ENCODE measurements at regions of chr3 and their contacts with region 1.

Region 1: GRCh38 chr3:196568246-196569002 is at the starts of genes FBXO45 and WDR53:
- DNase-seq: peak; percentile 97
- H3K4me3 Mint-ChIP-seq: peak within 1 kb of the TSS; percentile 98
- H3K27ac Mint-ChIP-seq: peak within 1 kb of the TSS; percentile 91
- H3K4me1 Mint-ChIP-seq: peaks cover 46% of the 10 kb centered on the region
- H3K27me3 Mint-ChIP-seq: no peaks in the 10 kb centered on the region
- total RNA-seq, gene FBXO45: 11.8 to 12.8 TPM
- total RNA-seq, gene WDR53: 14.3 to 15.8 TPM

Region 2: DNA sequence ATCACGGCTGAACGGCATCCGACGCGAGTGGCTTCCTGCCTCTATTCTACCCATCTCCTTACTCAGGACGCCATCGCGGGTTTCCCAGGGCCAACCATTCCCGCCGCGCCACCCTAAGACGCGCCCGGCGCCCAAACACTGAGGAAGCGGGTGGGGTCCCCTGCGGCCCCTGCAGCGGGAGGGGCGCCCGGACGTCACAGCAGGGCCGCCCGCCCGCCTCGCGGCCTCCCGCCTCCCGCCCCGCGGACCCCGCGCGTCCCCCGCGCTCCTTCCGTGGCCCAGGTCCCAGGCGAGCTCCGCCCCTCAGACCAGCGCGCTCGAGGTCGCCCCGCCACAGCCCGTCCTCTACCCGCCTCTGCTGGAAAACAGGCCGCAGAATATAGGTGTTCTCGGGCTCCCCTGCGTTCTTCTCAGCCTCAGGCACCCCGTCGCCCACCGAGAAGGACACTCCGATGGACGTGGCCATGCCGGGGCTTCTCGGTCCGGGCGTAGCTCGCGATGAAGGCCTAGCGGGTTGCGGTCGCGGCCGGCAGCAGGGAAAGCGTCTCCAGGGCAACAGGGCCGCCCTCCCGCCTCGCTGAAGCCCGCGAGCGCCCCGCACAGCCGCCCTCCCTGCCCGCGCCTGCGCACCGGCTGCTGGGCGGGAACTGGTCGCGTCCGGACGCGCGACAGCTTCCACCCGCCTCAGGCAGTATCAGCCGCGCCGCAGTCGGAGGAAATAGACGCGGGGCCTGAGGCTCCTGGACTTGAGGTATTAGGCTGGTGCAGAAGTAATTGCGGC is 250.5 kb before region 1 on chr3 and contains the start of gene DYNLT2B:
- CTCF ChIA-PET with region 1: no interaction called
- intact Hi-C with region 1: loop called (anchors 1 kb)
- DNase-seq: peak; percentile 88
- H3K4me3 Mint-ChIP-seq: peak within 1 kb of the TSS; percentile 94
- H3K27ac Mint-ChIP-seq: peak within 1 kb of the TSS; percentile 93
- H3K4me1 Mint-ChIP-seq: peaks cover 20% of the 10 kb centered on the region
- H3K27me3 Mint-ChIP-seq: no peaks in the 10 kb centered on the region
- total RNA-seq, gene DYNLT2B: 13.3 TPM

Region 3: GRCh38 chr3:196502775-196503195 is 65.6 kb before region 1 on chr3:
- CTCF ChIA-PET with region 1: no interaction called
- intact Hi-C with region 1: loop called (anchors 1 kb)
- DNase-seq: peak; percentile 77
- H3K4me3 Mint-ChIP-seq: peak overlapping the region; percentile 88
- H3K27ac Mint-ChIP-seq: peak overlapping the region; percentile 93
- H3K4me1 Mint-ChIP-seq: peaks cover 33% of the 10 kb centered on the region
- H3K27me3 Mint-ChIP-seq: no peaks in the 10 kb centered on the region

Region 4: GRCh38 chr3:196519718-196520082 is 48.7 kb before region 1 on chr3:
- CTCF ChIA-PET with region 1: no interaction called
- intact Hi-C with region 1: no loop called
- DNase-seq: peak; percentile 51
- H3K4me3 Mint-ChIP-seq: no peak overlapping the region
- H3K27ac Mint-ChIP-seq: no peak overlapping the region
- H3K4me1 Mint-ChIP-seq: no peaks in the 10 kb centered on the region
- H3K27me3 Mint-ChIP-seq: no peaks in the 10 kb centered on the region

Region 5: GRCh38 chr3:196537319-196537984 is 31.0 kb before region 1 on chr3:
- CTCF ChIA-PET with region 1: no interaction called
- intact Hi-C with region 1: loop called (anchors 2 kb)
- DNase-seq: peak; percentile 83
- H3K4me3 Mint-ChIP-seq: no peak overlapping the region
- H3K27ac Mint-ChIP-seq: no peak overlapping the region
- H3K4me1 Mint-ChIP-seq: no peaks in the 10 kb centered on the region
- H3K27me3 Mint-ChIP-seq: peaks cover 2% of the 10 kb centered on the region

Region 6: DNA sequence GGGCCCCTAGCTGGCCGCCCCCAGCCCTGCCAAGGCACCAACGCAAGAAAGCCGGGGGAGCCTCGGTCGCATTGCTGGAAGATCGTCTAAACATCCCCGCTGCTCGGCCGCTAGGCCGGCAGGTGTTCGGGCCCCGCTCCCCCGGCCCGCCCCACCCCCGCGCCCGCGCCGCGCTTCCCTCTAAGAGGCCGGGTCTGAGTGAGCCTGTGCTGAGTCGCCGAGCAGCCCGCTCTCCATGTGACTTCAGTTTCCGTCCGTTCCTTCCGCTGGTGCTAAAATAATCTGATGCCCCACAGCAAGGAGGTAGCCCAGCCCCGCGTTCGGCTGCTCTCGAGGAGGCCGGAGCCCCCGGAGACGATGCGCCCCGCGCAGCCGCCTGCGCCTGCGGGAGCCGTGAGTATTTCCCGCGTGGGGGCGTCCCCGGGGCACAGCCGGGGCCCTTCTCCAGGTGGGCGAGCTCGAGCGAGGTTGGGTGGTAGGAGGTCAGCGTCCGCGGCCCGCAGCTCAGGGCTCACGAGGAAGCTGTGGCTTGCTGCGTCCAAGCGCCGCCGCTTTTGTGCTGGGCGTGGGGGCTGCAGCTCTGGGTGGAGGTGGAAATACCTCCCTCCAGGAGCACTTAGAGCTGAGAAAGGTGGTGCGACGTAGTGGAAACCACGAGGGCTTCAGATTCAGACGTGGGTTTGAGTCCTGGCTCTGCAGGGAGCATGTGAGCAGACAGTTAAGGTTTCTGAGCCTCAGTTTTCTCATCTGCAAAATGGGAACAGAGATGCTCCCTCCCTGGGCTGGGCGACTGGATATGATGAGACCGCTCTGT is 71.3 kb after region 1 on chr3 and contains the start of gene NRROS:
- CTCF ChIA-PET with region 1: interaction called, 3 read pairs
- intact Hi-C with region 1: loop called (anchors 1 kb)
- DNase-seq: peak; percentile 77
- H3K4me3 Mint-ChIP-seq: peak within 1 kb of the TSS; percentile 80
- H3K27ac Mint-ChIP-seq: peak within 1 kb of the TSS; percentile 82
- H3K4me1 Mint-ChIP-seq: peaks cover 45% of the 10 kb centered on the region
- H3K27me3 Mint-ChIP-seq: no peaks in the 10 kb centered on the region
- total RNA-seq, gene NRROS: 8.1 to 9.2 TPM

Region 7: DNA sequence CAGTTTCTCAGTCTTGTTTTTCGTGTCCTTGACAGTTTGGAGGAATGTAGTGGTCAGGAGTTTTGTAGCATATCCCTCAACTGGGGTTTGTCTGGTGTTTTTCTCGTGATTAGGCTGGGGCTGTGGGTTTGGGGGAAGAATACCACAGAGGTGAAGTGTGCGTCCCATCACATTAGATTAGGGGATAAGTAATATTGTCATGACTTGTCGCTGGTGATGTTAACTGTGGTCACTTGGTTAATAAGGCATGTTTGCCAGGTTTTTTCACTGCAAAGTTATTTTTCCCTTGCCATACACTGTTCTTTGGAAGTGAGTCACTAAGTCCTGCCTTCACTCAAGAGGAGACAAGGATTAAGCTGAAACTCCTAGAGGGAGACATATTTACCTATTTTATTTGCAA is 210.3 kb after region 1 on chr3:
- CTCF ChIA-PET with region 1: no interaction called
- intact Hi-C with region 1: no loop called
- DNase-seq: no peak
- H3K4me3 Mint-ChIP-seq: no peak overlapping the region
- H3K27ac Mint-ChIP-seq: no peak overlapping the region
- H3K4me1 Mint-ChIP-seq: peaks cover 47% of the 10 kb centered on the region
- H3K27me3 Mint-ChIP-seq: no peaks in the 10 kb centered on the region

Region 8: DNA sequence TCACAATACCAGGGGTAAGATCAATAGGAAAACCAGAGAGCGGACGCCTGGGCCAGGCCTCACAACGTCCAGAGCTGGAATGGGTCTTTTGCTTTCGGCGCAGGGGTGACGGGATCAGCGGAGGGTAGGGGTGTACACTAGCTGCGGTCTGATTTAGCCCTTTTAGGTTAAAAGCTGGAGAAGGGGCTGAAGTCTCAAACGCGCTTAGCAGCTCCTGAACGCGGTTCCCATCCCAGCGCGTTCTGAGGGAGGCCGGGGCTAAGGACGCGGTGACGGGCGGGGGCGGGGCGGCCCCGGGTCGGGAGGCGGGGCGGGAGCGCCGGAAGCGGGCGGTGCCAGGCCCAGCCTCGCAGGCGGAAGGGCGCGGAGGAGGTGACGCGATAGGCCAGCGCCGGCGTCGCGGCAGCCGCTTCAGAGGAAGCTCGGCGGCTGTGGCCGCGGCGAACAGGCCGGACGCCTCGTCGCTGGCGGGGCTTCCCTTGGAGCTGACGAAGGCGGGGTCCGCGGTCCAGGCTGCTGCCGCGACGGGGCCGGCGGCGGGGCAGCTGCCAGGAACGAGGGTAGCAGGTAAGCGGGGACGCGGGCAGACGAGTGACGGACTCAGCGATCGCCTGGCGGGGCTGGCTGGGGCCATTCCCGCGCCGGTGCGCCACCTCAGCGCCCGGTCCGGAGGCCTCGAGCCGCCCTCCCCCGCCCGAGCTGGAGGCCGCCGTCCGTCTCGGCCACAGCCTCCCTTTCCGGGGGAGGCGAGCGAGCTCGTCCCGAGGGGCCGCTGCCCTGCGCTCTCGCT is 299.3 kb after region 1 on chr3 and contains the start of gene SENP5:
- CTCF ChIA-PET with region 1: no interaction called
- intact Hi-C with region 1: loop called (anchors 1 kb)
- DNase-seq: peak; percentile 92
- H3K4me3 Mint-ChIP-seq: peak within 1 kb of the TSS; percentile 97
- H3K27ac Mint-ChIP-seq: peak within 1 kb of the TSS; percentile 91
- H3K4me1 Mint-ChIP-seq: peaks cover 31% of the 10 kb centered on the region
- H3K27me3 Mint-ChIP-seq: no peaks in the 10 kb centered on the region
- total RNA-seq, gene SENP5: 24.1 to 24.4 TPM